CD4-positive, alpha-beta memory T cell (primary cell): ENCODE measurements at regions of chrX and their contacts with region 1.

Region 1: GRCh38 chrX:19772826-19773628 is 114.4 kb downstream of the SH3KBP1 start:
- DNase-seq: peak in 1 of 5 donors; percentile 51
- H3K4me3 ChIP-seq: no peak overlapping the region
- H3K4me3 Mint-ChIP-seq: peak overlapping the region in 7 of 8 donors; percentile 60 to 86 (median 72)
- H3K27ac ChIP-seq: peak overlapping the region; percentile 58
- H3K27ac Mint-ChIP-seq: peak overlapping the region; percentile 84 to 97 (median 90)
- H3K4me1 ChIP-seq: peaks cover 87% of the 10 kb centered on the region
- H3K4me1 Mint-ChIP-seq: peaks cover 45 to 80% (median 59%) of the 10 kb centered on the region in 4 donors
- H3K27me3 ChIP-seq: no peaks in the 10 kb centered on the region
- H3K27me3 Mint-ChIP-seq: no peaks in the 10 kb centered on the region

Region 2: DNA sequence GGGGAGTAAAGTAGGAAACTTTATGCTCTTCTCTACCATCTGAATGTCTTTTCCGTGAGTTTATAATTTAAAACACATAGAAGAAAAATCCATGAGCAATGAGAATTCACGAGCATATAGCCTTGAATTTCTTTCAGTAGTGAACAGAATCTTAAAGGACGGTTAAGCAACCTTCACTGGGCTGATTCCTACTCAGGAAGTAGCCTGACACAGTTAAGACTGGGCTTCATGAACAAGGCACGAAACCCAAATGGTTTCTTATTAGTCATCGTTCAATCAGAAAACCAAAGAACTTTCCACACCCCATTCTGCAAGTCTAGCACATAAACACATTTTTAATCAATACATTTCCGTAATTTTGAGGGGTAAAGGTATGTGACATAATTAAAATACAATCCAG is 18.5 kb after region 1 on chrX:
- CTCF ChIA-PET with region 1: interaction called, 4 read pairs
- POLR2A ChIA-PET with region 1: interaction called, 15 read pairs
- intact Hi-C with region 1: no loop called
- DNase-seq: peak in 2 of 5 donors; percentile 30 to 68
- H3K4me3 ChIP-seq: no peak overlapping the region
- H3K4me3 Mint-ChIP-seq: peak overlapping the region; percentile 33 to 89 (median 70)
- H3K27ac ChIP-seq: no peak overlapping the region
- H3K27ac Mint-ChIP-seq: peak overlapping the region; percentile 7 to 90 (median 73)
- H3K4me1 ChIP-seq: peaks cover 90% of the 10 kb centered on the region
- H3K4me1 Mint-ChIP-seq: peaks cover 45 to 81% (median 68%) of the 10 kb centered on the region in 4 donors
- H3K27me3 ChIP-seq: no peaks in the 10 kb centered on the region
- H3K27me3 Mint-ChIP-seq: no peaks in the 10 kb centered on the region

Region 3: DNA sequence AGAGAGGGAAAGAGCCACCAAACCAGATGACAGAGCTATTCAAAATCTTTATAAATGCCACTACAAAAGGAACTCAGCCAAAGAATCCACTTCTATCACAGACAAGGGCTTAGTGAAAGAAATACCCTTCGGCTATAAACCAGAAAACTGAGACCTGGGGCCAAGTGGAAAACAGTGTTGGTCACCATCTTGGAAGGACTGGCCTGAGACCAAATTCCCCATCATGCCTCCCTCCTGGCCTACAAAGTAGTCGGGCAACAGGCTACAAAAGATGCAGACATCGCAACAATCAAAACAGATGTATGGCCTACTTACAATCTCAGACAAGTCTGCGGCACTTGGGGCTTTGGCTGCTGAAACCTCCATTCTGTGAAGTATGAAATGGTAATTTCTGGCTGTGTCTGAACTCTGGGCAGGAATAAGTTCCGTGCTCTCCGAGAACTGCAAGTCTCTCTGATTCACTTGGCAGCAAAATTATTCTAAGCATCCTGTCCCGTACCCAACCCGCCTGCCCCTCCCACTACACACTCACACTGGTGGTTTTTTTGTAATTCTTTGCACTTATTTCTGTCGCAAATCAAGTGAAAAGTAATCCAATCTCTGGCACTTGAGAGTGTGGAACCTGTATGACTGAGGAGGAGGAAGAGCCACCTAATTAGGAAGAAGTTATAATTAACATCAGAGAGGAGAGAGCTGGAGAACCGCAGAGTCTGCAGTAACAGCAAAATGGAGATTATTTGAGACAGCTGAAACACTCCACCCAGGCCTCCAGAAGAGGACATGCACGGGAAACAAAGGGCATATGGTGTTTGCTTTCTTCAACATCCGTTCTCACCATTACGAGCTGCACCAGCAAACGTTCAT is 26.5 kb after region 1 on chrX:
- CTCF ChIA-PET with region 1: interaction called, 4 read pairs
- POLR2A ChIA-PET with region 1: interaction called, 15 read pairs
- intact Hi-C with region 1: loop called (anchors 2 kb)
- DNase-seq: peak; percentile 64 to 76 (median 72)
- H3K4me3 ChIP-seq: peak overlapping the region; percentile 55 to 68
- H3K4me3 Mint-ChIP-seq: peak overlapping the region; percentile 90 to 96 (median 93)
- H3K27ac ChIP-seq: peak overlapping the region; percentile 68
- H3K27ac Mint-ChIP-seq: peak overlapping the region; percentile 88 to 98 (median 95)
- H3K4me1 ChIP-seq: peaks cover 67% of the 10 kb centered on the region
- H3K4me1 Mint-ChIP-seq: peaks cover 38 to 81% (median 51%) of the 10 kb centered on the region in 4 donors
- H3K27me3 ChIP-seq: no peaks in the 10 kb centered on the region
- H3K27me3 Mint-ChIP-seq: no peaks in the 10 kb centered on the region